Activated CD4-positive, alpha-beta T cell treated with anti-CD3 and anti-CD28 coated beads for 36 hours (primary cell): ENCODE measurements at regions of chr7 and their contacts with region 1.

Region 1: DNA sequence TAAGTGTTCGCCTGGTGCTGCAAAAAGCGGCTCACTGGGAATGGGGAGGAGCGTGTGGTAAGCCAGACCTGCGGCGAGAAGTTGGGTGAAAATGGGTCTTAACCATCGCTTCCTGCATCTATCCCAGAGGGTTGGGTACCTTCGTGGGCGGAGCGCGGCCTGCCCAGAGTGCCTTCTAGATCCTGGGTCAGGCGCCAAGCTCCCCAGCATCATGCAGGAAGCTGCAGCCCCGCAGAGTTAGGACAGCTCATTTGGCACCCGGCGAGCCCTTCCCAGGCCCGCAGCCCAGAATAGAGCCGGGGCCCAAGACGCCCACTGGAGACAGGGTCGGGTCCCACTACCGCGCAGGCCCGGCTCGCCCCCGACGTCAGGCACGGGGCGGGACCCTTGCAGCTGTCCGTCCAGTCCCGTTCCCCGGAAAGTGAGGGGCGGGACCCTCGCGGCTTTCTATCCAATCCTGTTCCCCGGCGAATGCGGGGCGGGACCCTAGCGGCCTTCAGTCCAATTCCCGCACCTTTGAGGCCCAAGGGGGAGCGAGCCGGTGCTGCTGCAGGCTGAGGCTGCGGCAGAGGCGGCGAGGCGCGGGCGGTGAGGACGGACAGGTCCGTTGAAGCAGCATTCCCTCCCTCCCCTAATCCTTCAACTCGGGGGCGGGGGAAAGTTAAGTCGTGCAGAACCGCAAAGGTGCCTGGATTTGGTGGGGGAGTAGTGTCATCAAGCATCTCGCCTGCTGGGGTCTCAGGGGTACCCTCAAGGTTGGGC is at the start of gene CROT:
- DNase-seq: peak; percentile 97
- ATAC-seq: peak; percentile 98
- H3K4me3 Mint-ChIP-seq: peak within 1 kb of the TSS; percentile 94
- H3K27ac Mint-ChIP-seq: peak within 1 kb of the TSS; percentile 95
- H3K4me1 Mint-ChIP-seq: peaks cover 45% of the 10 kb centered on the region
- H3K27me3 Mint-ChIP-seq: no peaks in the 10 kb centered on the region
- total RNA-seq, gene CROT: 4.6 to 7.0 TPM

Region 2: DNA sequence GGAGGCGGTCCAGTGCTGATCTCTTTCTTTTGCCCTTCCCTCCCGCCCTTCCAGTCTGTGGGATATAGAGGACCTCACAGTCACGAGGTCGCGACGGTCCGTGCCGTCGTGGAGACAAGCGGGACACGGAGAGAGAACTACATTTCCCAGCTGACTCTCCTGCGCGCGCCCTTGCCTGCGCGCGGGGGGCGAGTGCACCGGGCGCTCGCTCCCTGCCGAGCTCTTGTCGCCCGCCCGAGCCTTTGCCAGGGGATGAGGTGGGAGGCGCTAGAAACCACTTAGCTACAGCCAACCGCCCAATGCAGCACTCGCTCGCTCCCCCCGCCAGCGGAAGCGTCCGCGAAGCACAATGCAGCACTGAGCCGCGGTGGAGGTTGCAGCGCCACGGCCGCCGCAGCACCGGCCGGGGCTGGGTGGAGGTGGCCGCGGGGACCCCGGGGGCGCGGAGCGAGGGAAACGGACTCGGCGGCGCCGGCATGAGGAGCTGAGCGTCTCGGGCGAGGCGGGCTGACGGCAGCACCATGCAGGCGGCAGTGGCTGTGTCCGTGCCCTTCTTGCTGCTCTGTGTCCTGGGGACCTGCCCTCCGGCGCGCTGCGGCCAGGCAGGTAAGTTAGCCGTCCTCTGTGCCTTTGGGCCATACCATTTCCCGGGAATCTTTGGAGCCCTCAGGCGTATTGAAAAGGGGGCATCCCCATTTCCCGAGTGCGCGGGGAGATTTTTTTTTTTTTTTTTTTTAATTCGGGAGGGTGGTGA is 588.8 kb after region 1 on chr7 and contains the start of gene ADAM22:
- CTCF ChIA-PET with region 1: no interaction called
- POLR2A ChIA-PET with region 1: no interaction called
- intact Hi-C with region 1: loop called in 1 of 2 experiments (anchors 10 kb)
- DNase-seq: peak; percentile 89
- ATAC-seq: peak; percentile 98
- H3K4me3 Mint-ChIP-seq: peak within 1 kb of the TSS; percentile 81
- H3K27ac Mint-ChIP-seq: peak within 1 kb of the TSS; percentile 81
- H3K4me1 Mint-ChIP-seq: peaks cover 9% of the 10 kb centered on the region
- H3K27me3 Mint-ChIP-seq: peaks cover 5% of the 10 kb centered on the region
- total RNA-seq, gene ADAM22: 1.1 to 1.8 TPM